MCF 10A (cell line): ENCODE measurements at regions of chr20 and their contacts with region 1.

Region 1: DNA sequence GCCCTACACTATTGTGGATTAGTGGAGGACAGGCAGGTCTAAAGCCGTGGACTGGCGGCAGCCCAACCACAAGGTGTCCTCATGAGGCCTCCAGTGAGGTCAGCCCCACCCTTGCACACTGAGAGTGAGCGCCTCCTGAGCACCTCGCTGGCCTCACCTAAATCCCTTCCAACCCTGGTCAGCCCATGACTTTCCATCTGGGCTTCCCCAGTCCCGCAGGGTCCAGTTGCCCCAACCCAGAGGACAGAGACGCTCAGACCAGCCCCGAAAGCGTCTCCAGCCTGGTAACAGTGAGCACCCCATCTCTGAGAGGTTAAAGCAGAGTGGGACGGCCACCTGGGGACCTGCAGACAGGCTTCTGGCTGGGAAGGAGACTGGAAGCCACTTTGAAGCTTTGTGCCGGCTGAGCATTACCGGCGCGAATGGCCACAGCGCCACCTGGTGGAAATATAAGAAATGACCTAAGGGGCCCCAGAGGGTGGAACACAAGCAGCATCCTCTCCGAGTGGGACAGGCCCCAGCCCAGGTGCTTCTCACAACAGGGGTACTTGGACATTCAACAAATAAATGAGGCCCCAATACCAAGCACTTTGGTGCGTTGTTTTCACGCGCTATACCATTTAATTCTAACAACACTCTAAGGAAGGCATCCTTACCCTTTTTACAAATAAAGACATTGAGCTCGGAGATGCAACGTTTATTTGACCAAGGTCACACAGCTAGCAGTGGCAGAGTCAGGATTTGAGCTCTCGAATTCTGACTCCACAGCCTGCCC is 65.7 kb upstream of the TOP1 start:
- DNase-seq: peak; percentile 71
- H3K4me3 Mint-ChIP-seq: no peak overlapping the region
- H3K27ac Mint-ChIP-seq: no peak overlapping the region
- H3K4me1 Mint-ChIP-seq: peaks cover 20% of the 10 kb centered on the region
- H3K27me3 Mint-ChIP-seq: no peaks in the 10 kb centered on the region
- CTCF ChIP-seq: peak; percentile 84

Region 2: DNA sequence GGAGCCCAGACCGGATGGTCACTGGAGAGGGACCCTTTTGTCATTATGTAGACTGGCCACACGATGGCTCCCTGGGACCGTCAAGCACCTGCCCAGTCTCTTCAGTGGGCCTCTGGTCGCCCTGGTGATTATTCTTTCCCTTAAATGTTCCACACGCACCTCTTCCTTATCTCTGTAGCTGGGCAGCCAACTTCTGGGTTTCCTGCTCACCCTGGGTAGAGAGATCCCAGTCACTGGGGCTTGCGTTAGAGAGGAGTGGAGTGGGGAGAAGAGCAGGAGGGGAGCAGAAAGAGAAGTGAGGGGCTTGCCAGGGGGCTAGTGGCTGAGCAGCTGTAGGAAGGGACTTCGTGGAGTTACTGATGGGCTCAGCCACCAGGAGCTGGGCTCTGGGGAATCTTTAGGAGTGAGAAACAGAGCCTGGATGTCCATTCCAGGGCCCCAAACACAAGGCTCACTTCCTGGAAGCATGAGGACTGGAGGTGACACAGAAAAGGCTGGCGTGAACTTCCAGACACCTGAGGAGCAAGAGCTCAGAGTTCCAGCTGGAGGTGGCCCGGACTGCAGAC is 1850.7 kb before region 1 on chr20:
- CTCF ChIA-PET with region 1: interaction called, 34 read pairs
- POLR2A ChIA-PET with region 1: no interaction called
- intact Hi-C with region 1: loop called (anchors 2 kb)
- DNase-seq: peak; percentile 50
- H3K4me3 Mint-ChIP-seq: no peak overlapping the region
- H3K27ac Mint-ChIP-seq: no peak overlapping the region
- H3K4me1 Mint-ChIP-seq: peaks cover 5% of the 10 kb centered on the region
- H3K27me3 Mint-ChIP-seq: peaks cover 36% of the 10 kb centered on the region
- CTCF ChIP-seq: peak; percentile 88

Region 3: DNA sequence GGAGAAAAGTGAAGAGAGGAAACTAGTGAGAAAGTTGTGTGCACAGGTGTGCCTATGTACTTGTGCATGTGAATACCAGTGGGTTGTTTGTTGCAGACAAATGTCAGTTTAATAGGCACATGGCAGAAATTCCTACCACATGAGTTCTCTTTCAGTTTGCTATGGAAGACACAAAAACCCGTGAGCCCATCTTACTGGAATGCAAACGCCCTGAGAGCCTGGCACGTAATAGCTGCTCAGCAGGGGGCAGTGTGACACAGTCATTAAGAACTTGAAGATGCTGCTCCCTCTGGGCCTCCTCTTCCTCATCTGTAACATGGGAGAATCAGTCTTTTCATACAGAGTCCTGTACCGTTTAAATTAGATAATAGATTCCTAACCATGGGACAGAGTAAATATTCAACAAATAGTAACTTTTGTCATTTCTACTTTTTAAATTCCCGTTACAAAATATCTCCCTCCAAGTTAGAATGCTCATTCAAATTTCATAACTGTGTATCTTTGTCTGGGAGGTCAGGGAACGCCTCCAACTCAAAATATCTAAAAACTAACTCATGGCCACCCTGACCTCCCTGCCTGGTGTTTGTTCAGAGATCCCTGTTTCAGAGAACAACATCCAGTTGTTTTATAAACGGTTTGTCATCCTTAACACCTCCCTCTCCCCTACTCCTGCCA is 1076.8 kb before region 1 on chr20:
- CTCF ChIA-PET with region 1: interaction called, 9 read pairs
- POLR2A ChIA-PET with region 1: interaction called, 3 read pairs
- intact Hi-C with region 1: loop called (anchors 1 kb)
- DNase-seq: peak; percentile 80
- H3K4me3 Mint-ChIP-seq: no peak overlapping the region
- H3K27ac Mint-ChIP-seq: no peak overlapping the region
- H3K4me1 Mint-ChIP-seq: peaks cover 9% of the 10 kb centered on the region
- H3K27me3 Mint-ChIP-seq: no peaks in the 10 kb centered on the region
- CTCF ChIP-seq: peak; percentile 58

Region 4: DNA sequence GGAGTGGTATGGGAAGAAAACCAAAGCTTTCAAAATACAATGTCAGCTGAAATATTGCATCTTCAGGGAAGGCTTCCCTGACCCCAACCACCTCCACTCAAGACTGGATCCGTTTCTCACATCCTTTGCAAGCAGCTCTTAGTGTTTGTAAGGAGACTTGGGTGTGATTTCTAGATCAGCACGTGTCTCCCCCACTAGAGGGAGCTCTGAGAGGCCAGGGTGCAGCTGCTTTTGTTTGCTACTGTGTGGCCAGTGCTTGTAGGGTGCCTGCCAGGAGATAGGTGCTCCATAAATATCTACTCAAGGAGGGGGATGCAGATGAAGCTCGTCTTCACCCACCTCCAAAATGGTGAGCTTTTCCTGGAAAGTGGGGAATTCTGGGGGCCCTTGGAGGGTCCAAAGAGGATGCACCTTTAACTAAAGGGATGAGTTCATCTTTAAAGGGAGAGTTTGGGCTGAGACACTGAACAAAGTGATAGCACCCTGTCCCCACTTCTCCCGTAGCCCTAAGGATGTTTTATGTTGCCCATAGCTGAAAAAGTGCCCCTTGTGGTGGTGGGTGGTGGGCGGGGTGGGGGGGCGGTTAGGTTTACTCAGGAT is 221.3 kb before region 1 on chr20:
- CTCF ChIA-PET with region 1: interaction called, 37 read pairs
- POLR2A ChIA-PET with region 1: no interaction called
- intact Hi-C with region 1: loop called (anchors 1 kb)
- DNase-seq: peak; percentile 69
- H3K4me3 Mint-ChIP-seq: no peak overlapping the region
- H3K27ac Mint-ChIP-seq: no peak overlapping the region
- H3K4me1 Mint-ChIP-seq: no peaks in the 10 kb centered on the region
- H3K27me3 Mint-ChIP-seq: peaks cover 14% of the 10 kb centered on the region
- CTCF ChIP-seq: peak; percentile 67

Region 5: DNA sequence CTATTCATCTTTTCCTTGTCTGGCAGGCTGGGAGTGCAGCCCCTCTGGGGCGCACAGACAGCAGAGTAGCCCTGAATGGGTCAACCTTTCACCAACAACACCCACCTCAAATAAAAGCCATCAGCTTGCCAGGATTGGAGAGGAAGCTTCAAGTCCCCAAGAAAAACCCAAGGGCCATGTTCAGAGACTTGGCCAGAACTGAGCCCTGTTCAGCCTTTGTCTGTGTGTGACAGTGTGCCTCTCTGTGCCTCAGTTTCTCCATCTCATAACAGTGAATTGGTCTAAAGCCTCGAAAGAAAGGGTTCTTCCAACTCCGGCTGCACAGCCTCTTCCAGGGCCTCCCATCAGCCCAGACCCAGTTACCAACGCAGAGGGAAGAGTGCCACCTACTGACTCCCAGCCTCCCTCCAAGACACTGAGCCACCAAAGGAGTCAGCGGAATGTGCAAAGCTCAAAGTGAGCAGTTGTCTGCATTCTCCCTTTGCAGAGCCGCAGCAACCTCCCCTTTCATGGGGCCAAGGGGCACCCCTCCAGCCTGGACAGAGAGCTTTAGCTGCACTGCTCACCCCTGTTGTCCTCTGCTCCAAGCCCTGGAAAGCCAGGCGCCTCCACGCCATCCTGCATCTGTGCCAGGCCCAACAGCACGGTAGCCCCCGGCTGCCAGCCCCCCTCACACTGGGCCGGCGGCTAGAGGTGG is 17.0 kb before region 1 on chr20:
- CTCF ChIA-PET with region 1: interaction called, 44 read pairs
- POLR2A ChIA-PET with region 1: no interaction called
- intact Hi-C with region 1: no loop called
- DNase-seq: peak; percentile 52
- H3K4me3 Mint-ChIP-seq: no peak overlapping the region
- H3K27ac Mint-ChIP-seq: no peak overlapping the region
- H3K4me1 Mint-ChIP-seq: peaks cover 6% of the 10 kb centered on the region
- H3K27me3 Mint-ChIP-seq: no peaks in the 10 kb centered on the region
- CTCF ChIP-seq: peak; percentile 16